ENCODE measurements at regions of chr16 and their contacts with region 1.

Region 1: GRCh38 chr16:68084492-68085258 is 495 bp upstream of the NFATC3 start:
- DNase-seq: peak; percentile 95 to 99
- H3K4me3 ChIP-seq: peak overlapping the region; percentile 94 to 98
- H3K27ac ChIP-seq: peak overlapping the region; percentile 99
- H3K4me1 ChIP-seq: peaks cover 67% of the 10 kb centered on the region
- H3K27me3 ChIP-seq: no peaks in the 10 kb centered on the region
- CTCF ChIP-seq: no peak
- POLR2A ChIP-seq: peak in 1 of 2 donors; percentile 40

Region 2: GRCh38 chr16:68022704-68023522 is 61.8 kb before region 1 on chr16 and contains the starts of genes DDX28 and DUS2:
- intact Hi-C with region 1: loop called (anchors 5 kb)
- DNase-seq: peak in 1 of 2 donors; percentile 93
- H3K4me3 ChIP-seq: peak within 1 kb of the TSS; percentile 88 to 93
- H3K27ac ChIP-seq: peak within 1 kb of the TSS; percentile 77
- H3K4me1 ChIP-seq: peaks cover 24% of the 10 kb centered on the region
- H3K27me3 ChIP-seq: no peaks in the 10 kb centered on the region
- CTCF ChIP-seq: peak in 2 of 3 experiments; percentile 0 to 8
- POLR2A ChIP-seq: no peak
- total RNA-seq, gene DDX28: 17.7 TPM
- total RNA-seq, gene DUS2: 11.5 TPM

Region 3: DNA sequence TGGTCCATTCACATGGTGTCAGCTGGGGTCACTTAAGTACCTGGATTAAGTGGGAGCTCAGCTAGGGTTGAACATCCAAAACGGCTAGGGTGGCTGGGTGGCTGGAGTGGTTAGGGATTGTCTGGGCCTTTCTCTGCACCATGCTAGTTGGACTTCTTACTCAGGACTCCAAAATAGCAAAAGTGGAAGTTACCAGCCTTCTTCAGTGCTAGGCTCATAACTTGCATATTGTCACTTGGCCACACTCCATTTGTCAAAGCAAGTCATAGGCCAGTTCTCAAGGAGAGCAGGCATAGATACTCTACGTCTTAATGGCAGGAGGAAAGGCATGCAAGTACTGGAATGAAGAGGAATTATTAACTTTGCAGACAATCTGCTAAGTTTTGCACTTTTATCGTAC is 81.6 kb after region 1 on chr16:
- intact Hi-C with region 1: no loop called
- DNase-seq: no peak
- H3K4me3 ChIP-seq: no peak overlapping the region
- H3K27ac ChIP-seq: no peak overlapping the region
- H3K4me1 ChIP-seq: no peaks in the 10 kb centered on the region
- H3K27me3 ChIP-seq: no peaks in the 10 kb centered on the region
- CTCF ChIP-seq: no peak
- POLR2A ChIP-seq: no peak

Region 4: DNA sequence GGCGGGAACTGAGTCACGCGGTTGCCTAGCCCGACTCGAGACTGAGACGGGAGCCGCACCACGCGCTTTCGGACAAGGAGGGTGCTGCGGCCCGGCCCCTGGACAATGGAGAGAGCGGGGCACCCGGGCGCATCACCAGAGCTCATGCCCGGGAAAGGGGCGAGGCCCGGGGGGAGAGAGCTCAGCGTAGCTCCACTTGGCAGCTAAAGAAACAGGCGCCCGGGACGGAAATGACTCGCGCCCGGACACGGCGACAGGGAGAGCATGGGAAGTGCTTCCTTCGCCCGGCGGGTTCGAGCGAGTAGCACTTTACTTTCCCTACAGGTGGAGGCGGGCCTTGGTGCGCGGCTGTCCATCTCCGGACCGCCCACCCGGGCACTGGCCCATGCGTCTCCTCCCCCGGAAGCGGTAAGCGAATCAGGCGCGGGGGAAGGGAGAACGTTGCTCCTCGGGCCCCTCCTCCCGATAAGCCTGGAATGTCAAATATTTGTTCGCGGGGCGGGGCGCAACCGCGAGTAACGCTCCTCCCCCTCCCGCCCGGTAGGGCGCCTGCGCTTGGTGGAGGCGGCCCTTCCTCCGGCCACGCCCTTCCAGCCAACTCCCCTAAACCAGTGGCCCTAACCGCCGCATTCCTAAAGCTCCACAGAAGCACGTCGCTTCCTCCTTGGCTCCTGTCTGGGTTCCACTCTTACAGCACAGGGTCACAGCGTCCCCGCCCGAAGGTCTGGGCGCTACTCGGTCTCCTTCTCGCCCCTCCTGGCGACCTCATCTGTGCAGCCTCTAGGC is 152.8 kb after region 1 on chr16:
- intact Hi-C with region 1: loop called (anchors 5 kb)
- DNase-seq: peak in 1 of 2 donors; percentile 99
- H3K4me3 ChIP-seq: peak overlapping the region; percentile 64 to 72
- H3K27ac ChIP-seq: peak overlapping the region; percentile 61
- H3K4me1 ChIP-seq: peaks cover 40% of the 10 kb centered on the region
- H3K27me3 ChIP-seq: no peaks in the 10 kb centered on the region
- CTCF ChIP-seq: peak in 2 of 3 experiments; percentile 13 to 14
- POLR2A ChIP-seq: peak in 1 of 2 donors; percentile 83